Endothelial cell of umbilical vein (primary cell): ENCODE measurements at regions of chr10 and their contacts with region 1.

Region 1: GRCh38 chr10:102399217-102400089 is 3.9 kb downstream of the NFKB2 start:
- DNase-seq: peak; percentile 82
- H3K4me3 ChIP-seq: peak overlapping the region in 2 of 3 experiments; percentile 15 to 48
- H3K27ac ChIP-seq: no peak overlapping the region
- H3K4me1 ChIP-seq: peaks cover 13% of the 10 kb centered on the region
- H3K27me3 ChIP-seq: no peaks in the 10 kb centered on the region
- CTCF ChIP-seq: peak; percentile 93 to 96
- POLR2A ChIP-seq: no peak

Region 2: DNA sequence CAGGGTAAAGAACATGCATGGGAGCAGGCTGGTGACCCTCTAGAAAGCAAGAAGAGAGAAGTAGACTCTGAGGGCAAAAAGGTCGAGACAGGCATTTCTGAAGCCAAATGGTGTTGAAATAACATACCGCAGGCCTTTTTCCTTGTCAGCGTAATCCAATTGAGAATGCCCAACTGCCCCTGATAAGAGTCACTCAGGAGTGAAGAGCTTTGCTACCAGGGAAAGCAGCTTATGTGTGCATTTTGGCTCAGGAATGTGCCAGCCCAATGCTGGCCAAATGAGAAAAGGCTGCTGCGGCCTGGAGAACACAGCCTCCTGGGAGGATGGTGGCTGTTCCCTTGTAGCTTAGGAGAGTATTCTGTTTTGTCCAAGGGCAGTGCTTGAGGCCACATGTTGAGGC is 65.4 kb before region 1 on chr10:
- CTCF ChIA-PET with region 1: no interaction called
- POLR2A ChIA-PET with region 1: no interaction called
- dilution Hi-C with region 1: no loop called
- intact Hi-C with region 1: no loop called
- DNase-seq: no peak
- H3K4me3 ChIP-seq: no peak overlapping the region
- H3K27ac ChIP-seq: no peak overlapping the region
- H3K4me1 ChIP-seq: no peaks in the 10 kb centered on the region
- H3K27me3 ChIP-seq: no peaks in the 10 kb centered on the region
- CTCF ChIP-seq: no peak
- POLR2A ChIP-seq: no peak

Region 3: GRCh38 chr10:102384053-102384452 is 15.4 kb before region 1 on chr10:
- CTCF ChIA-PET with region 1: interaction called, 30 read pairs
- POLR2A ChIA-PET with region 1: interaction called, 3 read pairs
- dilution Hi-C with region 1: no loop called
- intact Hi-C with region 1: no loop called
- DNase-seq: no peak
- H3K4me3 ChIP-seq: no peak overlapping the region
- H3K27ac ChIP-seq: no peak overlapping the region
- H3K4me1 ChIP-seq: no peaks in the 10 kb centered on the region
- H3K27me3 ChIP-seq: no peaks in the 10 kb centered on the region
- CTCF ChIP-seq: peak in 1 of 2 donors; percentile 7
- POLR2A ChIP-seq: no peak